GM18951 (cell line): ENCODE measurements at regions of chr2 and their contacts with region 1.

Region 1: DNA sequence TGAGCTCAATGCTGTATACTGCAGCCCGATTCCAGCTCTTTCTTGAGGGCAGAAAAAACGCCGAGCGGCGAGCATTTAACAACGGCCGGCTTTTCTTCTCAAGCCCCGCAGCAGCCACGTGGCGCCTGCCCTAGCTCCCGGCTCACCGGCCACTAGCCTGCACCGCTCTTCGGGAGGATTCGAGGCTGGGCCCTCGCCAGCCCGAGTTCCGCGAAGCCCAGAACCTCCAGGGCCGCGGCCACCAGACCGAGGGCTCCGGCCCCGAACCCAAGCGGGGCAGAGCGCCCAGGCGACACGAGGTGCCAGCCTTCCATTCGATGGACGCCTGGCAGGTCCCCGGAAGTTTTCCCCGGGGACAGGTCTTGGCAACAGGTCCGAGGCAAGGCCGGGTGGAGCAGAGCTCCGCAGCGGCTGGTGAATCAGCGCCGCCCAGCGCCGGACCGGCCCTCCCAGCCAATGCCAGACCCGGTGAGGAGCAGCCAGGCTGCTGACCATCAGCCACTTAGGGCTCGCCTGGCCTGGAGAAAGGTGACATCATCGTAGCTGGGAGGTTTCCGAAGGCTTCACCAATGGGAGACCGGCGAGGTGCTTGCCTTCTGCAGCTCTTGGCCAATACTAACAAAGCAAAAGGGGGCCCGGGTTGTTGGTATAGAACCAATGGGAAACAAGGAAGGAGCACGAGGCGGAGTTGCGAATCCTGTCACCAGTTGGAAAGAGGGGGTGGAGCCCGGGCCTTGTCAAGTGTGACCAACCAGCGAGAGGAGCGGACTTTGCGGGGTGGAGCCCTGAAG is 544 bp upstream of the MXD1 start:
- POLR2A ChIP-seq: peak; percentile 77

Region 2: GRCh38 chr2:69619725-69620124 is 294.6 kb before region 1 on chr2:
- in situ Hi-C with region 1: no loop called
- POLR2A ChIP-seq: no peak

Region 3: DNA sequence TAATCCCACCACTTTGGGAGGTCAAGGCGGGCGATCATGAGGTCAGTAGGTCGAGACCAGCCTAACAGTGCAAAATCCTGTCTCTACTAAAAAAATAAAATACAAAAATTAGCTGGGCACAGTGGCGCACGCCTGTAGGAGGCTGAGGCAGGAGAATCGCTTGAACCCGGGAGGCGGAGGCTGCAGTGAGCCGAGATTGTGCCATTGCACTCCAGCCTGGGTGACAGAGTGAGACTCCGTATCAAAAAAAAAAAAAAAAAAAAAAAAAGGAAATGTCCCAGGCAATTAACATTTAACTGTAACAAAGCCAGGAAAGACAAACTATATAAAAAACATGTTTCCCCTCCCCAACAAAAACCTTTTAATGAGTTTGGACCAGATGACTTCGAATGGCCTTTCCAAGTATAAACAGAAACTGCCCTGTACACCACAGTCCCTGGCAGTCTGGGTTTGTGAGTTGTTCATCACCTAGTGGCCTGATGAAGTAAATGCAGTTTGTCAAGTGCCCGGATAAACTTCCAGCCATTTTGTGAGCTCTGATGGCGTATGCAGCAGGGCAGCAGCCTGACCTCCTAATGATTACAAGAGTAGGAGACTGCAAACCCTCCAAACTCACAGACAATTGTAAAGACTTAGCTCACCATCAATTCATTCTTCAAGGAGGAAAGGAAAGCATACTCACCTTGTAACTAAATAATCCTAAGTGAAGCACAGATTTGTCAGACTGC is 156.3 kb after region 1 on chr2:
- in situ Hi-C with region 1: loop called (anchors 10 kb)
- POLR2A ChIP-seq: no peak

Region 4: GRCh38 chr2:70145816-70146733 is 231.7 kb after region 1 on chr2:
- in situ Hi-C with region 1: loop called (anchors 5 kb)
- POLR2A ChIP-seq: no peak